Sigmoid colon (tissue), 7 donors: ENCODE measurements at regions of chr12 and their contacts with region 1.

Region 1: DNA sequence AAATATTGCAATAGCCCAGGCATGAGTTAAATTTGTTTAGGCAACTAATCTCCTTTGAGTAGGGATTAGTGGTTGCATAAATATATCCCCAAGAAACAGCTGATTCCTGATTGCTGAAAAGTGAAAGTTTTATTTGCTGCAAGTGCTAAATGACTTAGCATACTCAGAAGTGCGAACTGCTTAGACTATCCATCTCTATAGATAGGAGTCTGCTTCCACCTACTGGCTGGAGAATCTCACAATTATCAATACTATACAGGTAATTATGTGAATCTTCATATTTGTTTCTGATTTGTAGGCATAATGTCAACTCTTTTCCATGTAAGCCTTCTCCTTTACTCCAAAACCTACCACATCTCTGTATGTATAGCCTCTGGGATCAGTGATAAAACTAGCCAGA is 11.9 kb upstream of the SLCO1B3 start:
- DNase-seq: no peak
- H3K4me3 ChIP-seq: no peak overlapping the region
- H3K27ac ChIP-seq: no peak overlapping the region
- H3K4me1 ChIP-seq: peaks cover 0 to 4% (median 0%) of the 10 kb centered on the region in 4 donors
- H3K27me3 ChIP-seq: no peaks in the 10 kb centered on the region
- CTCF ChIP-seq: peak in 3 of 4 experiments; percentile 21 to 39 (median 29)
- EP300 ChIP-seq: no peak
- POLR2A ChIP-seq: no peak

Region 2: DNA sequence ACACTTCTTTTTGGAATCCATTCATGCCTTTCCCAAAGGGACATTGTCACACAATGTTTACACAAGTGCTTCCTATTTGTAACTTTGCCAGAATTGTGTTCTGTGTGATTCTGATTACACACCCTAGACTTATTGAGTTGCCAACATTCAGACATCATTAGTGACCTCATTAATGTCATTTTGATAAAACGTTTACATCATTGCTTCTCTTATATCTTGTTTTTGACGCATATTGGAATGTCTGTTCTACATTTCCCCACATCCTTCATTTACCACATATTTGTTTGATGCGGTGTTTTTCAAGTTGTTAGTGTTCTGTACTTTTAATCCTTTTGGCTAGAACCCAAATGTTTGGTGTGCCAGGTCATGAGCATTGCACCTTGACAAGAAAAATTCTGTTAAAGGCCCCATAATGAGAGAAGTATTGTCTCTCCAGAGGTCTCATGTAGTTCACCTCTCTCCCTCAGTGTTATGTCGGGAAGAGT is 1053.8 kb before region 1 on chr12:
- intact Hi-C with region 1: loop called (anchors 5 kb)
- DNase-seq: no peak
- H3K4me3 ChIP-seq: no peak overlapping the region
- H3K27ac ChIP-seq: peak overlapping the region in 1 of 4 donors; percentile 17
- H3K4me1 ChIP-seq: peaks cover 0 to 42% (median 17%) of the 10 kb centered on the region in 4 donors
- H3K27me3 ChIP-seq: no peaks in the 10 kb centered on the region
- CTCF ChIP-seq: no peak
- EP300 ChIP-seq: peak in 1 of 4 donors; percentile 43
- POLR2A ChIP-seq: no peak

Region 3: DNA sequence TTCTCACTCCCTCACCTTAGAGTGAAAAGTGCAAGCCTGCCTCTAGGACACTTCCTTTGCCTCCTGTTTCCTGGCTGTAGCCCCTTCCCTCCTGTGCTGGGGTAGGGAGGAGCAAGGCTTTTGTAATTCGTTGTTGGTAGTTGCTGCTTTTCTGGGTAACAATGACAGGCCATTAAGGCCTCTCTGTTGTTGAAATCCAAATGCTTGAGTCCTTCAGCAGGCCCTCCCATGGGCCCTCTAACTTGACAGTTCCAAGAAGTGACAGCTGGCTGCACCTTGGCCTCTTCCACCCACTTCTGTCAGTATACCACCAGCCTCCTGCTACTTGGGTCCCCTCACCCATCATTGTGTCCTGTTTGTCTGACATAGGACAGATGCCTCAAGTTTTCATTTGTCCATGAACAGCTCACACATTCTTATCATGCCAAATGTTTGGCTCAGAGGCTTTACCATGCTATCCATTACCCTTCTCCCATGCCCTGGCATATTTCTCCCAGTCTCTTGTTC is 533.9 kb before region 1 on chr12:
- intact Hi-C with region 1: no loop called
- DNase-seq: no peak
- H3K4me3 ChIP-seq: no peak overlapping the region
- H3K27ac ChIP-seq: no peak overlapping the region
- H3K4me1 ChIP-seq: peaks cover 0 to 15% (median 8%) of the 10 kb centered on the region in 4 donors
- H3K27me3 ChIP-seq: no peaks in the 10 kb centered on the region
- CTCF ChIP-seq: no peak
- EP300 ChIP-seq: no peak
- POLR2A ChIP-seq: no peak

Region 4: GRCh38 chr12:20463913-20464524 is 334.5 kb before region 1 on chr12:
- intact Hi-C with region 1: loop called (anchors 10 kb)
- DNase-seq: no peak
- H3K4me3 ChIP-seq: no peak overlapping the region
- H3K27ac ChIP-seq: peak overlapping the region in 3 of 4 donors; percentile 70 to 77 (median 75)
- H3K4me1 ChIP-seq: peaks cover 0 to 37% (median 27%) of the 10 kb centered on the region in 4 donors
- H3K27me3 ChIP-seq: no peaks in the 10 kb centered on the region
- CTCF ChIP-seq: peak; percentile 48 to 59 (median 54)
- EP300 ChIP-seq: no peak
- POLR2A ChIP-seq: no peak